ENCODE measurements at regions of chr6 and their contacts with region 1.

Region 1: DNA sequence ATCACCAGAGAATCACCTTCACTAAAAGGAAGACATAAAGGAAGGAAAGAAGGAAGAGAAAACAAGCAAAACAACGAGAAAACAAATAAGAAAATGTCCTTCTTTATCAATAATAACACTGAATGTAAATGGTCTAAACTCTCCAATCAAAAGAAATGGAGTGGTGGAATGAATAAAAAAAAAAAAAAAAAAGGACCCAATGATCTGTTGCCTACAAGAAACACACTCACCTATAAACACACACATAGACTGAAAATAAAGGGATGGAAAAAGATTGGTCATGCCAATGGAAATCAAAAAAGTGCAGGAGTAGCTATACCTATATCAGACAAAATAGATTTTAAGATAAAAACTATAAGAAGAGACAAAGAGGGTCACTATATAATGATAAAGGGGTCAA is 30.2 kb upstream of the HLA-E start:
- DNase-seq: no peak
- H3K4me3 Mint-ChIP-seq: no peak overlapping the region
- H3K27ac Mint-ChIP-seq: no peak overlapping the region
- H3K4me1 Mint-ChIP-seq: no peaks in the 10 kb centered on the region
- H3K27me3 Mint-ChIP-seq: peaks cover 87% of the 10 kb centered on the region
- CTCF ChIP-seq: no peak

Region 2: DNA sequence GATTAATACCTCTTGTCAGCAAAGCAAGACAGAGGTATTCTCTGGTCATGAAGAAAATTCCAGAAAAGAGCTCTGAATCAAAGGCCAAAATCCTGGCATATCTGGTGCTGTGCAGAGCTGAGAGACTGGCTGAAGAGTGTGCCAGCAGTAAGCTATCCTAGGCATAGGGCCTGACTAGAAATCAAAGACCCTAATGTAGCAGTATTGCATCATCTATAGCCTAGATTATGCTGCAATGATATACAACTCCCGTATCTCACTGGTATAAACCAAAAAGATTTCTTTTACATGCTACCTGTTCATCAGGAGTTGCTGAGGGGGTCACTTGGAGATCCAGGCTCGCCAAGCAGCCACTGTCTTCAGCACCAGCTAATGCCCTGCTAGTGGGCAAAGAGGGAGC is 163.3 kb before region 1 on chr6:
- CTCF ChIA-PET with region 1: no interaction called
- POLR2A ChIA-PET with region 1: no interaction called
- intact Hi-C with region 1: no loop called
- DNase-seq: no peak
- H3K4me3 Mint-ChIP-seq: no peak overlapping the region
- H3K27ac Mint-ChIP-seq: no peak overlapping the region
- H3K4me1 Mint-ChIP-seq: no peaks in the 10 kb centered on the region
- H3K27me3 Mint-ChIP-seq: no peaks in the 10 kb centered on the region
- CTCF ChIP-seq: no peak

Region 3: GRCh38 chr6:30590509-30590908 is 131.4 kb after region 1 on chr6:
- CTCF ChIA-PET with region 1: no interaction called
- POLR2A ChIA-PET with region 1: no interaction called
- intact Hi-C with region 1: no loop called
- DNase-seq: no peak
- H3K4me3 Mint-ChIP-seq: no peak overlapping the region
- H3K27ac Mint-ChIP-seq: no peak overlapping the region
- H3K4me1 Mint-ChIP-seq: no peaks in the 10 kb centered on the region
- H3K27me3 Mint-ChIP-seq: no peaks in the 10 kb centered on the region
- CTCF ChIP-seq: no peak

Region 4: GRCh38 chr6:31037682-31038081 is 578.5 kb after region 1 on chr6:
- CTCF ChIA-PET with region 1: no interaction called
- POLR2A ChIA-PET with region 1: no interaction called
- intact Hi-C with region 1: loop called (anchors 5 kb)
- DNase-seq: no peak
- H3K4me3 Mint-ChIP-seq: no peak overlapping the region
- H3K27ac Mint-ChIP-seq: no peak overlapping the region
- H3K4me1 Mint-ChIP-seq: peaks cover 7% of the 10 kb centered on the region
- H3K27me3 Mint-ChIP-seq: no peaks in the 10 kb centered on the region
- CTCF ChIP-seq: no peak

Measured in MCF 10A (cell line).